Heart right ventricle (tissue), 16 donors: ENCODE measurements at regions of chr7 and their contacts with region 1.

Region 1: GRCh38 chr7:117019786-117020590 is 66.7 kb downstream of the ST7 start:
- DNase-seq: peak; percentile 50 to 74
- ATAC-seq: peak; percentile 92 to 99 (median 96)
- H3K4me3 ChIP-seq: peak overlapping the region in 9 of 10 donors; percentile 0 to 50 (median 44)
- H3K27ac ChIP-seq: peak overlapping the region in 8 of 10 donors; percentile 46 to 69 (median 64)
- H3K4me1 ChIP-seq: peaks cover 0 to 78% (median 39%) of the 10 kb centered on the region in 9 donors
- H3K27me3 ChIP-seq: no peaks in the 10 kb centered on the region
- CTCF ChIP-seq: no peak

Region 2: DNA sequence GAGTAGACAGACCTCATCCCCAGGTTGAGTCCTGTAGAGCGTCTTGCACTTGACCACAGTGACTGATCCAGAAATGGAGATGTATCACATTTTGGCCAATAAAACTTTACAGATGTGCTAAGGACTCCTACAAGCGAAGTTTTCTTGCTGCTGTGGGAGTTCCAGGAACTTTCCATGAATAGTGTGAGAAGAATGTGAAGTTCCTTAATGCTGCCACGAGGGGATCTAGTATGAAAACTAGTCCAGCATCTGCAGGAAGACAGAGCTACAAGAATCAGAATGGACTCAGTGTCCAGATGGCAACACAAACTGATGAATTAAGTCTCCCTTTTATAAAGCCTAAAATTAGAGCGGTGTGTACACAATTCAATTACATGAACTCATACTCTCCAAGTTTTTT is 1149.2 kb after region 1 on chr7:
- intact Hi-C with region 1: loop called in 1 of 10 experiments (anchors 5 kb)
- DNase-seq: no peak
- ATAC-seq: no peak
- H3K4me3 ChIP-seq: no peak overlapping the region
- H3K27ac ChIP-seq: no peak overlapping the region
- H3K4me1 ChIP-seq: no peaks in the 10 kb centered on the region
- H3K27me3 ChIP-seq: peaks cover 0 to 4% (median 0%) of the 10 kb centered on the region in 7 donors
- CTCF ChIP-seq: no peak